Naive thymus-derived CD4-positive, alpha-beta T cell (primary cell): ENCODE measurements at regions of chr10 and their contacts with region 1.

Region 1: DNA sequence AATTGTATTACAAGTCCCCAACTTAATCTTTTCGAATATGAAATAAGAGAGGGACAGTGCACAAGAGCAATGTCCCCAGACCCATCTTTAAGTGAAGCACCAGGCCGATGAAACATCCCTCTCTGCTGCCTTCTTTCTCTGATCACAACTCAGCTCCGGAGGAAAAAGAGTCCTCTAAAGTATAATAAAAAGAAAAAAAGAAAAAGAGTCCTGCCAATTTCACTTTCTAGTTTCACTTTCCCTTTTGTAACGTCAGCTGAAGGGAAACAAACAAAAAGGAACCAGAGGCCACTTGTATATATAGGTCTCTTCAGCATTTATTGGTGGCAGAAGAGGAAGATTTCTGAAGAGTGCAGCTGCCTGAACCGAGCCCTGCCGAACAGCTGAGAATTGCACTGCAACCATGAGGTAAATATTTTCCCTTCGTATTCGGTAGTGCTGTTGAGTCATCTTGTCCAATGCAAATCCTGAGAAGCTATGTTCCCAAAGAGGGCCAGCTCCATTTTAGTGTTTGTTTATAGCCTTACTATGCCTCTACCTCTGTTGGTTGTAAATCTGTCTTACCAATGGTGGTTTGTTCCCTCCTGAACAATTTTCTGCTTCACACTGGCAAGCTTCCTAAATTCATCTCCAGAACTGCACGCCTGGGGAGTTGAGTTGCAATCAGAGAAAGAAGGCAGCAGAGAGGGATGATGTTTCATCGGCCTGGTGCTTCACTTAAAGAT is at the start of gene IFIT2:
- DNase-seq: peak in 7 of 9 donors; percentile 50 to 72 (median 60)
- ATAC-seq: peak; percentile 86
- H3K4me3 ChIP-seq: peak within 1 kb of the TSS; percentile 76
- H3K4me3 Mint-ChIP-seq: peak within 1 kb of the TSS; percentile 83 to 99 (median 94)
- H3K27ac ChIP-seq: peak within 1 kb of the TSS; percentile 71
- H3K27ac Mint-ChIP-seq: peak within 1 kb of the TSS; percentile 88 to 98 (median 97)
- H3K4me1 ChIP-seq: peaks cover 15 to 24% of the 10 kb centered on the region in 2 donors
- H3K4me1 Mint-ChIP-seq: peaks cover 24 to 60% (median 44%) of the 10 kb centered on the region in 7 donors
- H3K27me3 ChIP-seq: no peaks in the 10 kb centered on the region
- H3K27me3 Mint-ChIP-seq: peaks cover 0 to 25% (median 0%) of the 10 kb centered on the region in 5 donors
- total RNA-seq, gene IFIT2: 6.0 to 16.4 (median 8.4) TPM

Region 2: GRCh38 chr10:89327784-89328441 is 26.0 kb after region 1 on chr10 and contains the start of gene IFIT3:
- CTCF ChIA-PET with region 1: no interaction called
- POLR2A ChIA-PET with region 1: interaction called, 19 read pairs
- intact Hi-C with region 1: loop called (anchors 1 kb)
- DNase-seq: peak in 7 of 9 donors; percentile 22 to 42 (median 30)
- ATAC-seq: peak; percentile 65
- H3K4me3 ChIP-seq: peak within 1 kb of the TSS; percentile 68
- H3K4me3 Mint-ChIP-seq: peak within 1 kb of the TSS; percentile 80 to 94 (median 90)
- H3K27ac ChIP-seq: peak within 1 kb of the TSS; percentile 62
- H3K27ac Mint-ChIP-seq: peak within 1 kb of the TSS; percentile 70 to 94 (median 87)
- H3K4me1 ChIP-seq: peaks cover 14 to 25% of the 10 kb centered on the region in 2 donors
- H3K4me1 Mint-ChIP-seq: peaks cover 26 to 59% (median 54%) of the 10 kb centered on the region in 7 donors
- H3K27me3 ChIP-seq: no peaks in the 10 kb centered on the region
- H3K27me3 Mint-ChIP-seq: peaks cover 0 to 16% (median 0%) of the 10 kb centered on the region in 5 donors
- total RNA-seq, gene IFIT3: 1.8 to 22.3 (median 3.2) TPM

Region 3: GRCh38 chr10:89369156-89370105 is 67.5 kb after region 1 on chr10:
- CTCF ChIA-PET with region 1: interaction called, 13 read pairs
- POLR2A ChIA-PET with region 1: interaction called, 15 read pairs
- intact Hi-C with region 1: loop called in 1 of 2 experiments (anchors 1 kb)
- DNase-seq: peak in 6 of 9 donors; percentile 12 to 40 (median 24)
- ATAC-seq: peak; percentile 62
- H3K4me3 ChIP-seq: no peak overlapping the region
- H3K4me3 Mint-ChIP-seq: no peak overlapping the region
- H3K27ac ChIP-seq: no peak overlapping the region
- H3K27ac Mint-ChIP-seq: no peak overlapping the region
- H3K4me1 ChIP-seq: peaks cover 0 to 7% of the 10 kb centered on the region in 2 donors
- H3K4me1 Mint-ChIP-seq: peaks cover 0 to 18% (median 14%) of the 10 kb centered on the region in 7 donors
- H3K27me3 ChIP-seq: no peaks in the 10 kb centered on the region
- H3K27me3 Mint-ChIP-seq: peaks cover 0 to 37% (median 0%) of the 10 kb centered on the region in 5 donors